Right ventricle myocardium inferior (tissue), 1 donor: ENCODE measurements at regions of chr14 and their contacts with region 1.

Region 1: GRCh38 chr14:61321385-61322010 is at the start of gene PRKCH:
- DNase-seq: peak; percentile 82
- ATAC-seq: peak; percentile 70
- total RNA-seq, gene PRKCH: 16.4 TPM

Region 2: GRCh38 chr14:61355892-61356325 is 34.4 kb after region 1 on chr14:
- intact Hi-C with region 1: loop called (anchors 5 kb)
- DNase-seq: no peak
- ATAC-seq: peak; percentile 63

Region 3: DNA sequence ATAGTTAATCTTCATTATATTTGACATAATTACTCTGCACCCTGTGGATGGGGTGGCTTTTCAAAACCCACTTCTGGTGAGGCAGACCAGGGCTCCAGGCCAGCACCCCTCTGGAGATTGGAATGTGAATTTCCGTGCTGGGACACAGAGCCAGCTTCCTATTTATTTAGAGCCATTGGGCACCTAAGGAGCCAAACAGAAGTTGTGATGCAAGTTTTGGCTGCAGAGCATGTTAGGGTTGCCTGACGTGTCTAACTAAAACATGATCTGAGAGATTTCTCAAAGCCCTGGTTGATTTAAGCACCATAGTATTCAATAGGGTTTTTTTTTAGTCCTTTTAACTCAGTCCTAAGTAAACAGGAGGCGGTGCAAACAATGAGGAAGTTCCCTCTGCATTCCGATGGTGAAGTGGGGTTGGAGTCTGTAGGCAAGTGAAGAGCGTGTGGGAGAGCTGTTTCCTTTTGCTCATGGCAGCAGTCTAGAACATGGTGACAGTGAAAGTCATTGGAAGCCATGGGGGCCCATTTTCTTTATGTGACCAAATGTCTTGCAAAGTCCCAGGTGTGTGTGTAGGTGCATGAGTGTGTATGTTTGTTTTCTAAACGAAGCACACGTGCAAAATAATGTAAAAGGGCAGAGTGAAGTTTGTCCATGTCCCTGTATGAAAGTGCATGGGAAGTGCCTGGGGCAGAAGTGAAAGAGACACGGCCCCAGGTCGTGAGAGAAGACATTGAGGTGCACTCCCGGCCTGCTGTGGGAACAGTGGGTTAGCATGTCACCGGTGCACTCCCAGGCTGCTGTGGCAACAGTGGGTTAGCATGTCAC is 117.6 kb after region 1 on chr14:
- intact Hi-C with region 1: loop called (anchors 5 kb)
- DNase-seq: no peak
- ATAC-seq: peak; percentile 69